A549 (cell line): ENCODE measurements at regions of chr17 and their contacts with region 1.

Region 1: DNA sequence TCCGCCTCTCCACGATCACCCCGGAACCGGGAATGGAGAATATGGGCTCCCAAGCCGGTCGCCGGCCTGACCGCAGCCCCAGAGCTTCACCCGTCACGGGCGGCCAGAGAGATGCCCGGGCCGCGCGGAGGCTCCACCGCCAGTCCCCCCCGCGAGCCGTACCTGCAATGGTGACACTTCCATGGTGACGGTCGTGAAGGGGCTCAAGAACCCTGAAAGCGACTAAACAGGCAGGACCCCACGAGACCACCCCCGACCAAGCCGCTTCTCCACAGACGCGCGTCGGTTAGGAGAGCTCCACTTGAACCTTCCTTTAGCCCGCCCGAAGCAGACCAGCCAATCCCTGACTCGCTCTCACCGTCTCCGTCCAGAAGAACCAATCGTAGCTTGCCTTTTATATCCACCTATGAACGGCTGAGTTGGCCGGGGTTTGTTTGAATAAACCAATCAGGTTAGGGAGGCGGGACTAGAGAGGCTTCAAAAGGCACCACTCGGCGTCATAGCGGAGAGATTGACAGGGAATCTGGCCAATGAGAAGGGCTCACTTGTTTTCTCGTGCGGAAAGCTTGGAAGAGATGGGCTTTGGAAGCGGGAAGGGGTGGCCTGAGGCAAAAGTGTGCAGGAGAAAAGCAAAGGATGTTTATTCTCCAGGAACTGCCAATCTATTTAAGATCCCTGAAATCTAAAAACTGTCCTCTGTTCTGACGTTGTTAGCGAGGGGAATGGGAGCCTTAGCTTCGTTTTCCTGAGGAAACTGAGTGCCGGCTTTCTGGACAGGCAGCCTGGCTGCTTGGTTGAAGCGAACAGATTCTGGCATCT is at the start of gene TOP2A:
- DNase-seq: peak; percentile 100
- ATAC-seq: peak; percentile 95 to 96
- H3K4me3 ChIP-seq: peak within 1 kb of the TSS; percentile 68
- H3K27ac ChIP-seq: peak within 1 kb of the TSS; percentile 79 to 92
- H3K4me1 ChIP-seq: peaks cover 39% of the 10 kb centered on the region
- CTCF ChIP-seq: no peak
- EP300 ChIP-seq: no peak
- POLR2A ChIP-seq: peak; percentile 62
- RAD21 ChIP-seq: no peak
- polyA plus RNA-seq, gene TOP2A: 273 and 416 TPM in 2 replicates

Region 2: GRCh38 chr17:40247926-40248495 is 169.8 kb before region 1 on chr17:
- CTCF ChIA-PET with region 1: no interaction called
- POLR2A ChIA-PET with region 1: no interaction called
- DNase-seq: no peak
- ATAC-seq: no peak
- H3K4me3 ChIP-seq: no peak overlapping the region
- H3K27ac ChIP-seq: no peak overlapping the region
- H3K4me1 ChIP-seq: peaks cover 13% of the 10 kb centered on the region
- CTCF ChIP-seq: no peak
- EP300 ChIP-seq: no peak
- POLR2A ChIP-seq: no peak
- RAD21 ChIP-seq: no peak

Region 3: GRCh38 chr17:40303009-40303657 is 114.7 kb before region 1 on chr17:
- CTCF ChIA-PET with region 1: interaction called, 19 read pairs
- POLR2A ChIA-PET with region 1: no interaction called
- DNase-seq: peak; percentile 71 to 78
- ATAC-seq: peak; percentile 65 to 79
- H3K4me3 ChIP-seq: no peak overlapping the region
- H3K27ac ChIP-seq: peak overlapping the region; percentile 17 to 47; a peak in 4 of 6 replicates
- H3K4me1 ChIP-seq: peaks cover 38% of the 10 kb centered on the region
- CTCF ChIP-seq: peak; percentile 97
- EP300 ChIP-seq: no peak
- POLR2A ChIP-seq: no peak
- RAD21 ChIP-seq: peak; percentile 96 to 98

Region 4: DNA sequence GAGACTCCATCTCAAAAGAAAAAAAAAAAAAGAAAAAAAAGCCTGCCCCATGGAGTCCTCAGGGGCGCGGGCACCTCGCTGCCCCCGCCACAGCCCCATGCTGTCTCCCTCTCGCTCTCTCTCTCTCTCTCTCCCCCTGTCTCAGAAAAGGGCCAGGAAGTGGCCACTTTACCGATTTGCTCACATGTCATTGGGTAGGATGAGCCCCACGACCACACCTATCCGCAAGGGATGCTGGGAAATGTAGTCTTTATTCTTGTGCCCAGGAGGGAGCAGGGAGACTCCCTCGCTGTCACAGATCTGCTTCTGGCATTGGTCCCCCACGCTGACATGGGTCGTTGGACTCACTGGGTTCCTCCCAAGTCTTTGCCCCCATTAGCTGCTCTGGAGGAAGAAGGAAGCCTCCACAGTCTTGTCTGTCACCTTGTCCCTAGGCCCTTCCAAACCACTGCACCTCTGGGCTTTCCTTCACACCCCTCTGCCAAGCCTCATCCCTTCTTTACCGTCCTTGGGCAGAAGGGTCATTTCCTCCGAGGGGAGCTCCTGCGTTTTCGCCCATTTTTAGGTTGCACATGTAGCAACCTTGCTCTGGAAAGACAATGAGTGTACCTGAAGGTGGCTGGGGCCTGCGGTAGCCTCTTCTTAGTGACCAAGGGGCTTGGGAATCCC is 46.4 kb before region 1 on chr17:
- CTCF ChIA-PET with region 1: interaction called, 284 read pairs
- POLR2A ChIA-PET with region 1: no interaction called
- DNase-seq: peak in 1 of 2 experiments; percentile 70
- ATAC-seq: peak; percentile 59 to 69; a peak in 5 of 6 replicates
- H3K4me3 ChIP-seq: no peak overlapping the region
- H3K27ac ChIP-seq: no peak overlapping the region
- H3K4me1 ChIP-seq: peaks cover 9% of the 10 kb centered on the region; the same call in 1 of the 3 replicates
- CTCF ChIP-seq: no peak
- EP300 ChIP-seq: no peak
- POLR2A ChIP-seq: no peak
- RAD21 ChIP-seq: no peak

Region 5: GRCh38 chr17:40399185-40399584 is 18.6 kb before region 1 on chr17:
- CTCF ChIA-PET with region 1: interaction called, 113 read pairs
- POLR2A ChIA-PET with region 1: interaction called, 3 read pairs
- DNase-seq: peak; percentile 67 to 78
- ATAC-seq: peak; percentile 86 to 91; a peak in 5 of 6 replicates
- H3K4me3 ChIP-seq: no peak overlapping the region
- H3K27ac ChIP-seq: peak overlapping the region; percentile 27 to 44; a peak in 3 of 6 replicates
- H3K4me1 ChIP-seq: peaks cover 10% of the 10 kb centered on the region; the same call in 1 of the 3 replicates
- CTCF ChIP-seq: peak; percentile 85
- EP300 ChIP-seq: no peak
- POLR2A ChIP-seq: no peak
- RAD21 ChIP-seq: peak; percentile 50 to 72

Region 6: DNA sequence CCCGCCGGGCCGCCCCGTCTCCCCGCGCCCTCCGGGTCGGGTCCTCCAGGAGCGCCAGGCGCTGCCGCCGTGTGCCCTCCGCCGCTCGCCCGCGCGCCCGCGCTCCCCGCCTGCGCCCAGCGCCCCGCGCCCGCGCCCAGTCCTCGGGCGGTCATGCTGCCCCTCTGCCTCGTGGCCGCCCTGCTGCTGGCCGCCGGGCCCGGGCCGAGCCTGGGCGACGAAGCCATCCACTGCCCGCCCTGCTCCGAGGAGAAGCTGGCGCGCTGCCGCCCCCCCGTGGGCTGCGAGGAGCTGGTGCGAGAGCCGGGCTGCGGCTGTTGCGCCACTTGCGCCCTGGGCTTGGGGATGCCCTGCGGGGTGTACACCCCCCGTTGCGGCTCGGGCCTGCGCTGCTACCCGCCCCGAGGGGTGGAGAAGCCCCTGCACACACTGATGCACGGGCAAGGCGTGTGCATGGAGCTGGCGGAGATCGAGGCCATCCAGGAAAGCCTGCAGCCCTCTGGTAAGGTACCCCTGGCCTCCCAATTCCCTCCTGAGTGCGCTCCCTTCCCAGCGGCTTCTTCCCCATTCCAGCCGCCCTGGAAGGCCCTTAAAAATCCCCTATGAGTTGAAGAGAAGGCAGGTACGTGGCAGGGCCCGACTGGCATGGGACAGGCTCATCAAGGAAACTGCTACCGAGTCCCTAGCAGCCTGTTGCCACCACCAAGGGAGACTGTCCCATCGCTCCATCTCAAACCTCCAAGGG is 25.9 kb after region 1 on chr17:
- CTCF ChIA-PET with region 1: interaction called, 41 read pairs
- POLR2A ChIA-PET with region 1: interaction called, 8 read pairs
- DNase-seq: peak; percentile 81 to 84
- ATAC-seq: peak; percentile 35 to 60
- H3K4me3 ChIP-seq: peak overlapping the region; percentile 78
- H3K27ac ChIP-seq: peak overlapping the region; percentile 98
- H3K4me1 ChIP-seq: peaks cover 30% of the 10 kb centered on the region
- CTCF ChIP-seq: peak; percentile 44
- EP300 ChIP-seq: no peak
- POLR2A ChIP-seq: peak; percentile 52
- RAD21 ChIP-seq: peak; percentile 27 to 34; a peak in 1 of 5 replicates